Psoas muscle (tissue), 8 donors: ENCODE measurements at regions of chr1 and their contacts with region 1.

Region 1: DNA sequence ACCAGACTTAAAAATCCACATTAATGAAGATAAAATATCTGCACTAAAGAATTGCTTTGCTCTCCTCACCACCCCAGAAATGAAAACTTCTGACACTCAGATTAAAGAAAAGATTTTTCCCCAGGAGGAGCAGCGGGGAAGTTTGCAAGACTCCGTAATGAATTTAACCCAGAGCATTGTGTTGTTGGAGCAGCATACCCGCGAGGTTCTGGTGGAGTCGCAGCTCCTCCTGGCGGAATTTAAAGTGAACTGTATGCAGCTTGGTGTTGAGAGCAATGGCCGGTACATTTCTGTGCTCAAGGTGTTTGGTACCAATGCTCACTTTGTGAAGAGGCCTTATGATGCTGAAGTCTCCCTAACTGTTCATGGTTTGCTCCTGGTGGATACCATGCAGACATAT is 46.4 kb downstream of the VPS13D start:
- DNase-seq: no peak
- ATAC-seq: no peak
- H3K4me3 ChIP-seq: no peak overlapping the region
- H3K27ac ChIP-seq: no peak overlapping the region
- H3K4me1 ChIP-seq: peaks cover 6% of the 10 kb centered on the region
- H3K27me3 ChIP-seq: no peaks in the 10 kb centered on the region
- CTCF ChIP-seq: peak; percentile 37

Region 2: GRCh38 chr1:12232221-12232620 is 44.0 kb before region 1 on chr1:
- intact Hi-C with region 1: loop called in 1 of 2 experiments (anchors 2 kb)
- DNase-seq: peak; percentile 52 to 85
- ATAC-seq: peak; percentile 52 to 75 (median 63)
- H3K4me3 ChIP-seq: no peak overlapping the region
- H3K27ac ChIP-seq: peak overlapping the region; percentile 96
- H3K4me1 ChIP-seq: peaks cover 13% of the 10 kb centered on the region
- H3K27me3 ChIP-seq: no peaks in the 10 kb centered on the region
- CTCF ChIP-seq: no peak

Region 3: GRCh38 chr1:12339396-12339795 is 63.2 kb after region 1 on chr1:
- intact Hi-C with region 1: no loop called
- DNase-seq: no peak
- ATAC-seq: peak in 2 of 4 donors; percentile 18 to 27
- H3K4me3 ChIP-seq: no peak overlapping the region
- H3K27ac ChIP-seq: peak overlapping the region; percentile 65
- H3K4me1 ChIP-seq: peaks cover 63% of the 10 kb centered on the region
- H3K27me3 ChIP-seq: no peaks in the 10 kb centered on the region
- CTCF ChIP-seq: no peak